Ovary (tissue), 10 donors: ENCODE measurements at regions of chr20 and their contacts with region 1.

Region 1: DNA sequence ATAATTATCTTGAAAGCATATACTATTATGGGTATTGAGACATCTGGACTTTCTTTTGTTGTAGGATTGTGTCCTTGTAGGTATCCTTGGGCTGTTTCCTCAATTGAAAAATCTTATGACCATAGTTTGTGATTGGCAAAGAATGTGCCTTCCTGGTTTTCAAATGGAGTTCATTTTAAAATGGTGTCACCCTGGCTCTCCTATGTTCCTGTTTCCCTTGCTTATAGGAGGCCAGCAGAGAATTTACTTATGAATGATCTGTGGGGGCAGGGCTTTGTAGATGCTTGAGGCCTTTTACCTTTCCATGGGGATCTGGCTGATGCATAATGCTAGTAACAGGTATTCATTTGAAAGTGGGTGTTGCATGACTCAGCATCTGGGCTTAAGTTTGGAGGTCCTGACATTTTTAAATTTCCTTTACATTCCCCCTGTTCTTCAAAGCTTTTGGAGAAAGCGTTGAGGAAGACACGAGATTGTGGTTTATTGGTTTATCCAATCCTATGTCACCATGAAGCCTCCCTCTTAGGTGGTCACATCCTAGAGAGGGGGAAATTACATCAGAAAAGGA is 135.0 kb upstream of the PROKR2 start:
- DNase-seq: no peak
- H3K4me3 ChIP-seq: no peak overlapping the region
- H3K27ac ChIP-seq: no peak overlapping the region
- H3K4me1 ChIP-seq: no peaks in the 10 kb centered on the region
- H3K27me3 ChIP-seq: no peaks in the 10 kb centered on the region
- CTCF ChIP-seq: no peak
- EP300 ChIP-seq: no peak
- POLR2A ChIP-seq: no peak

Region 2: DNA sequence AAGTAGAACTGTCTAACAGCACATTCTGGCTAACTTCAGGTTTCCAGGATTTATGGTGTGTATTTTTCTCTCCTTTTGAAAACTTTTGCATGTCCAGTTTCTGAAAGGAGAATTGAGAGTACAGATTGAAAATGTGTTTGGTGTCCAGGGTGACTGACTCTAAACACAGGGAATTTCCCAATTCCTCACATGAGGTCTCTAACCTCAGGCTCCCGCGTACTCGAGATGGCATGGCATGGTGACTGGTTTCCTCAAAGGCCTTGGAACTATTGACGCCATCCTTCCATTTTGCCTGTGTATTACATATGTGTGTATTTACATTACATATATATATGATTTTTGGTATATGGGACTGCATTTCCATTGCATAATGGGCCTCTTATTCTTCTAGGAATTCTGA is 677.5 kb before region 1 on chr20:
- intact Hi-C with region 1: loop called in 1 of 4 experiments (anchors 5 kb)
- DNase-seq: no peak
- H3K4me3 ChIP-seq: no peak overlapping the region
- H3K27ac ChIP-seq: no peak overlapping the region
- H3K4me1 ChIP-seq: no peaks in the 10 kb centered on the region
- H3K27me3 ChIP-seq: no peaks in the 10 kb centered on the region
- CTCF ChIP-seq: no peak
- EP300 ChIP-seq: no peak
- POLR2A ChIP-seq: no peak

Region 3: GRCh38 chr20:5316188-5317158 is 135.3 kb before region 1 on chr20 and contains the start of gene PROKR2:
- intact Hi-C with region 1: no loop called
- DNase-seq: no peak
- H3K4me3 ChIP-seq: no peak within 1 kb of the TSS
- H3K27ac ChIP-seq: no peak within 1 kb of the TSS
- H3K4me1 ChIP-seq: no peaks in the 10 kb centered on the region
- H3K27me3 ChIP-seq: no peaks in the 10 kb centered on the region
- CTCF ChIP-seq: no peak
- EP300 ChIP-seq: no peak
- POLR2A ChIP-seq: no peak
- total RNA-seq, gene PROKR2: not detected

Region 4: DNA sequence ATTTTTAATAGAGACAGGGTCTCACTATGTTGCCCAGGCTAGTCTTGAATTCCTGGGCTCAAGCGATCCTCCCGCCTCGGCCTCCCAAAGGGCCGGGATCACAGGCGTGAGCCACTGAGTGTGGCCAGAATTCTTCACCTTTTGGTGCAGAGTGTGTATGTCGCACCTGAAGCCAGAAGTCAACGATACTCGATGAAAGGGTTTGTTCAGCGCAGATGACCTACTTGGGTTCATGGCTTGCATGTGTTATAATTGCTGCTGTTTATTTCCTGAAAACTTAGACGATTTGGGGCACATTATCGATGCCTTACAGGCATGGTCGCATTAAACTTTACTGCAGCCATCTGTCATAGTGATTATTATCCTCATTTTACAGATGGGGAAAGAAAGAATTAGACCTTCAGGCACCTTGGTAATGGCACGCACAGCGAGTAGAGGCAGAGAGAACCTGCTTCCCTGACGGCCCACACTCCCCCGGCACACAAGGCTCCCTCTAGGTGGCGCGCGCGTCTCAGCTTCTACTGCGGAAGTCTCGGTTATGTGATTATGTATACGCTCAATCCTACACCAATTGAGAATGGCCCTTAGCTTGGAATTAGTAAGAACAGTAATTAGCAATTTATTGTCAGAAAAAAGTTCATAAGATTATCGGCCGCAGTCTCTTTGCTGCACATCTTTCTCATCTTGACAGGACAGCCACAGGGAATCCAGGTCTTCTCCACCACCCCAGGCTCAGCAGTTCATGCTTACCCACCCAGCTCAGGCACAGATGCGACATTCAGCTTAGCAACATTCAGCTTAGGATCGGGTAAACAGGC is 77.8 kb after region 1 on chr20:
- intact Hi-C with region 1: no loop called
- DNase-seq: peak; percentile 77 to 88 (median 84)
- H3K4me3 ChIP-seq: no peak overlapping the region
- H3K27ac ChIP-seq: no peak overlapping the region
- H3K4me1 ChIP-seq: no peaks in the 10 kb centered on the region
- H3K27me3 ChIP-seq: no peaks in the 10 kb centered on the region
- CTCF ChIP-seq: peak; percentile 48 to 67 (median 62)
- EP300 ChIP-seq: no peak
- POLR2A ChIP-seq: no peak